Naive thymus-derived CD4-positive, alpha-beta T cell (primary cell): ENCODE measurements at regions of chr6 and their contacts with region 1.

Region 1: GRCh38 chr6:5471044-5471443 is 209.7 kb downstream of the FARS2 start:
- DNase-seq: peak; percentile 33 to 74 (median 56)
- ATAC-seq: peak; percentile 81
- H3K4me3 ChIP-seq: no peak overlapping the region
- H3K4me3 Mint-ChIP-seq: no peak overlapping the region
- H3K27ac ChIP-seq: no peak overlapping the region
- H3K27ac Mint-ChIP-seq: no peak overlapping the region
- H3K4me1 ChIP-seq: no peaks in the 10 kb centered on the region
- H3K4me1 Mint-ChIP-seq: peaks cover 0 to 14% (median 10%) of the 10 kb centered on the region in 7 donors
- H3K27me3 ChIP-seq: no peaks in the 10 kb centered on the region
- H3K27me3 Mint-ChIP-seq: no peaks in the 10 kb centered on the region

Region 2: DNA sequence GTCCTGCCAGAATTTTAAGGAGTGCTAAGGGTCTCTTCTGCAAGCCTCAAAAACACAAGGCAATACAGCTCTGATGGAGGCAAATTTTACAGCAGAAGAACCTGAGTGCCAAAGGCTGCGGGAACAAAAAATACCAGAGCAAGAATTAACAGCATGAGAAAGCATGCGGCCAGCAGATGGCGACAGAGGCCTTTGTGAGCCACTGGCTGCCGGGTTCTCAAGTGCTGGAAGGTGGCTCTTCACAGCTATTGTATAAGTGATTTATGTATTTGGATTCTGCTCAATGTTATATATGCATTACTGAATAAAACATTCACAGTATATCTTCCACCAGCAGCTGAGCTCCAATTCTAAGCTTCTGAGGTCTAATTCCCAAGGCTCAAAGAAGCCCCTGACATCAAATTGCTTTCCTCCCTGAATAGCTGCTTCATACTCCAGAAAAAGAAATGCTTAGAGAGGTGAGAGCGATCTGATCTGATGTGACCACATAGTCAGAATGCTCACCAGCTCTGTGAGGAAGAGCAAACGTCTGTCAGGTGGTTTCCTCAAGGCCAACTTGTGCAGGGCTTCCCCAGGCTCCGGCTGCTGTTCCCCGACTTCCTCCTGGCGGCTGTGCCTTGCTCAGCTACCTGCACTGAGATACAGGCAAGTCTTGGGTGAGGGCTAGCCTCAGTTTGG is 327.3 kb before region 1 on chr6:
- CTCF ChIA-PET with region 1: interaction called, 7 read pairs
- POLR2A ChIA-PET with region 1: no interaction called
- intact Hi-C with region 1: loop called in 1 of 2 experiments (anchors 1 kb)
- DNase-seq: peak; percentile 61 to 86 (median 73)
- ATAC-seq: peak; percentile 84
- H3K4me3 ChIP-seq: no peak overlapping the region
- H3K4me3 Mint-ChIP-seq: no peak overlapping the region
- H3K27ac ChIP-seq: no peak overlapping the region
- H3K27ac Mint-ChIP-seq: peak overlapping the region in 2 of 9 donors; percentile 18 to 25
- H3K4me1 ChIP-seq: no peaks in the 10 kb centered on the region
- H3K4me1 Mint-ChIP-seq: peaks cover 0 to 7% (median 5%) of the 10 kb centered on the region in 7 donors
- H3K27me3 ChIP-seq: no peaks in the 10 kb centered on the region
- H3K27me3 Mint-ChIP-seq: no peaks in the 10 kb centered on the region

Region 3: DNA sequence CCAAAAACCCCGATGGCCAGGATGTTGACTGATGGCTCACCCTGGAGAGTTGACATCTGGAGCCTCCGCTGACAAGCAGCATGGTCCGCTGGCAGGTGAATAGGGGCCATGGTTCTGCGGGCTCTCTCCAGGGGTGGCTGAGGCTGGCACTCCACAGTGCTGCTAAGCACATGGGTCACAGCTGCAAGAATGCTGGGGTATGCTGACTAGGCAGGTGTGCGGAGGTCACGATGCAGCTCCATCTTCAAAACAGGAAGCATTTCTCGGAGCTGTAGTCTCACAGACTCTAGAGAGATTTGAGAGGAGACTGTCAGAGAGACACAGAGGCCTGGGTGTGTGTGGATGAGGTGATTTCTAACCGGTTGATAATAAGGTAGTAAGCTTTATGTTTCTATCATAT is 194.1 kb after region 1 on chr6:
- CTCF ChIA-PET with region 1: interaction called, 12 read pairs
- POLR2A ChIA-PET with region 1: no interaction called
- intact Hi-C with region 1: loop called in 1 of 2 experiments (anchors 2 kb)
- DNase-seq: peak in 7 of 9 donors; percentile 25 to 75 (median 60)
- ATAC-seq: peak; percentile 84
- H3K4me3 ChIP-seq: peak overlapping the region; percentile 4
- H3K4me3 Mint-ChIP-seq: peak overlapping the region; percentile 41 to 81 (median 74)
- H3K27ac ChIP-seq: peak overlapping the region; percentile 45
- H3K27ac Mint-ChIP-seq: peak overlapping the region; percentile 75 to 98 (median 90)
- H3K4me1 ChIP-seq: peaks cover 0 to 56% of the 10 kb centered on the region in 2 donors
- H3K4me1 Mint-ChIP-seq: peaks cover 24 to 90% (median 84%) of the 10 kb centered on the region in 7 donors
- H3K27me3 ChIP-seq: no peaks in the 10 kb centered on the region
- H3K27me3 Mint-ChIP-seq: no peaks in the 10 kb centered on the region

Region 4: DNA sequence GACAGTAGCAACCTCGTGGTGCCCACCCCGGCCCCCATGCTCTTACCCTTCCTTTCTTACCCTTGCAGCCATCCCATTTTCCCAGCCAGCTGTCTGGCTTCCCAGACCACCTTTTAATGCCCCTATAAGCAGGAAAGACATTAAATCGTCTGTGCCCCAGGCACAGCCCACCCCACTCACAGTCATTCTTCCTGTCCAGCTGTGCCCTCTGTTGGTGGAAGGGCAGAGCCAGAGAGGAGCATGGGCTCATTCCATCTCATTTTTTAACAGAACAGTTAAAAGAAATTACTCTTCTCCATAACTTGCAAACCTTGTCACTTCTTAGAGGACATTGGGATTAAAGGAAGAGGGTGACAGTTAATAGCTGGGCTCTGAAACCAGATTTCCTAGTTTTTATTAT is 295.2 kb after region 1 on chr6:
- CTCF ChIA-PET with region 1: no interaction called
- POLR2A ChIA-PET with region 1: no interaction called
- intact Hi-C with region 1: loop called (anchors 5 kb)
- DNase-seq: no peak
- ATAC-seq: no peak
- H3K4me3 ChIP-seq: no peak overlapping the region
- H3K4me3 Mint-ChIP-seq: no peak overlapping the region
- H3K27ac ChIP-seq: no peak overlapping the region
- H3K27ac Mint-ChIP-seq: peak overlapping the region in 1 of 9 donors; percentile 52
- H3K4me1 ChIP-seq: no peaks in the 10 kb centered on the region
- H3K4me1 Mint-ChIP-seq: peaks cover 0 to 16% (median 5%) of the 10 kb centered on the region in 7 donors
- H3K27me3 ChIP-seq: no peaks in the 10 kb centered on the region
- H3K27me3 Mint-ChIP-seq: no peaks in the 10 kb centered on the region

Region 5: GRCh38 chr6:5851261-5851757 is 380.3 kb after region 1 on chr6:
- CTCF ChIA-PET with region 1: no interaction called
- POLR2A ChIA-PET with region 1: no interaction called
- intact Hi-C with region 1: no loop called
- DNase-seq: peak; percentile 57 to 81 (median 75)
- ATAC-seq: peak; percentile 96
- H3K4me3 ChIP-seq: peak overlapping the region; percentile 73
- H3K4me3 Mint-ChIP-seq: peak overlapping the region; percentile 81 to 94 (median 89)
- H3K27ac ChIP-seq: peak overlapping the region; percentile 73
- H3K27ac Mint-ChIP-seq: peak overlapping the region in 8 of 9 donors; percentile 43 to 96 (median 89)
- H3K4me1 ChIP-seq: peaks cover 0 to 10% of the 10 kb centered on the region in 2 donors
- H3K4me1 Mint-ChIP-seq: peaks cover 5 to 19% (median 10%) of the 10 kb centered on the region in 7 donors
- H3K27me3 ChIP-seq: no peaks in the 10 kb centered on the region
- H3K27me3 Mint-ChIP-seq: peaks cover 4 to 28% (median 7%) of the 10 kb centered on the region in 5 donors

Region 6: DNA sequence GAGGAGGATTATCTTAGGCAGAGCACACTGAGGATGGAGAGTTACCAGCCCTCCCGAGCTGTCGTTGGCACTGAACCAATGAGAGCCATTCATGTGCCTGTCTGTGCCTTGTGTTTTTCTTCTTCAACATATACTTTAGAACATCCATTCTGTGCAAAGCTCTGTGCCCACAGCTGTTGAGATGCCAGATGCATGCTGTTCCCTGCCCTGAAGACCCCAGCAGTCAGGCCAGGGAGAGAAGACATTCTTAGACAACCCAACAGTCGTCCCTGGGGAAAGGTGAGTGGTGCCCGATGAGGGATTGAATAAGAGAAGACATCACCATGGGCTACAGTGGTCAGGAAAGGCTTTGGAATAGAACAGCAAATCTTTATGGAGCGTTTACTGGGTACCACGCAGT is 421.6 kb after region 1 on chr6:
- CTCF ChIA-PET with region 1: interaction called, 3 read pairs
- POLR2A ChIA-PET with region 1: interaction called, 3 read pairs
- intact Hi-C with region 1: loop called in 1 of 2 experiments (anchors 5 kb)
- DNase-seq: no peak
- ATAC-seq: no peak
- H3K4me3 ChIP-seq: peak overlapping the region; percentile 19
- H3K4me3 Mint-ChIP-seq: peak overlapping the region in 9 of 10 donors; percentile 84 to 95 (median 93)
- H3K27ac ChIP-seq: peak overlapping the region; percentile 53
- H3K27ac Mint-ChIP-seq: peak overlapping the region; percentile 90 to 98 (median 95)
- H3K4me1 ChIP-seq: no peaks in the 10 kb centered on the region
- H3K4me1 Mint-ChIP-seq: peaks cover 5 to 12% (median 7%) of the 10 kb centered on the region in 7 donors
- H3K27me3 ChIP-seq: no peaks in the 10 kb centered on the region
- H3K27me3 Mint-ChIP-seq: peaks cover 0 to 7% (median 0%) of the 10 kb centered on the region in 5 donors

Region 7: GRCh38 chr6:6057424-6058053 is 586.5 kb after region 1 on chr6:
- CTCF ChIA-PET with region 1: no interaction called
- POLR2A ChIA-PET with region 1: no interaction called
- intact Hi-C with region 1: loop called in 1 of 2 experiments (anchors 1 kb)
- DNase-seq: peak in 5 of 9 donors; percentile 14 to 40 (median 26)
- ATAC-seq: peak; percentile 63
- H3K4me3 ChIP-seq: no peak overlapping the region
- H3K4me3 Mint-ChIP-seq: no peak overlapping the region
- H3K27ac ChIP-seq: no peak overlapping the region
- H3K27ac Mint-ChIP-seq: no peak overlapping the region
- H3K4me1 ChIP-seq: no peaks in the 10 kb centered on the region
- H3K4me1 Mint-ChIP-seq: no peaks in the 10 kb centered on the region
- H3K27me3 ChIP-seq: peaks cover 0 to 3% of the 10 kb centered on the region in 2 donors
- H3K27me3 Mint-ChIP-seq: peaks cover 26 to 48% (median 32%) of the 10 kb centered on the region in 5 donors

Region 8: GRCh38 chr6:6547110-6547879 is 1076.3 kb after region 1 on chr6:
- CTCF ChIA-PET with region 1: interaction called, 7 read pairs
- POLR2A ChIA-PET with region 1: no interaction called
- intact Hi-C with region 1: loop called (anchors 1 kb)
- DNase-seq: peak; percentile 62 to 88 (median 77)
- ATAC-seq: peak; percentile 95
- H3K4me3 ChIP-seq: peak overlapping the region; percentile 59
- H3K4me3 Mint-ChIP-seq: peak overlapping the region; percentile 75 to 88 (median 81)
- H3K27ac ChIP-seq: no peak overlapping the region
- H3K27ac Mint-ChIP-seq: peak overlapping the region in 2 of 9 donors; percentile 17 to 33
- H3K4me1 ChIP-seq: peaks cover 0 to 13% of the 10 kb centered on the region in 2 donors
- H3K4me1 Mint-ChIP-seq: peaks cover 0 to 9% (median 4%) of the 10 kb centered on the region in 7 donors
- H3K27me3 ChIP-seq: peaks cover 0 to 16% of the 10 kb centered on the region in 2 donors
- H3K27me3 Mint-ChIP-seq: peaks cover 35 to 78% (median 50%) of the 10 kb centered on the region in 5 donors